ENCODE measurements at regions of chr10 and their contacts with region 1.

Region 1: DNA sequence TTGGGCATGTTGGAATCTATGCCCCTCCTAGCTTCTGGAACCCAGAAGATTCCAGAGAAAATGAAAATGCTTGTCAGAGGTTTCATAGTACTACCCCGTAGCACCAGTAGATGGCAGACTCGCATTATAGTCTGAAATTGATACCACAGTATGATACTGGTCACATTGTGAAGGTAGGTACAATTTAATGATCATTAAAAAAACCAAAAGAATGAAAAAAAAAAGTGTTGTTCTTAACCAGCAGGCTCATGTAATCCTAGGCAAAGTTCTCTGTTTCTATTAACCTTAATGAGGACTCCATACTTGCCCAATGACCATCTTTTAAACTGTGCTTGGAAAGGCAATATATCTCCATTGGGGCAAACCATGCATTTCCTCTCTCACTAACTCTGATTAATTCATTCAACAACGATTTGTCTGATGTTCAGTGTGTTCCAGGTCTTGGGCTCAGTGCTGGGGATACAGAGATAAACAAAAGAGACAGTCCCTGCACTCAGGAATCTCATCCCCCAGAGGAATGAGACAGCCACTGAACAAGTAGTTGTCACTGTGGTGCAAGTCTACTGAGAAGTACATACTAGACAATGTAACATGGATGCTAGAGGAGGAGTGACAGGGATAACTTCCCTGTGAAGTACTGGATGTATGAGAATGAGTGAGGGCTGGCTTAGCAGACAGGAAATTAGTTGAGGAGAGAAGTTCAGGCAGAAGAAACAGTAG is 223.5 kb upstream of the PHYHIPL start:
- DNase-seq: peak; percentile 49
- H3K4me3 ChIP-seq: no peak overlapping the region
- H3K27ac ChIP-seq: peak overlapping the region; percentile 57 to 63
- H3K4me1 ChIP-seq: no peaks in the 10 kb centered on the region
- H3K27me3 ChIP-seq: no peaks in the 10 kb centered on the region
- CTCF ChIP-seq: peak; percentile 66 to 89 (median 80)
- POLR2A ChIP-seq: no peak

Region 2: GRCh38 chr10:58781873-58782488 is 170.9 kb before region 1 on chr10:
- intact Hi-C with region 1: loop called (anchors 5 kb)
- DNase-seq: peak; percentile 47
- H3K4me3 ChIP-seq: no peak overlapping the region
- H3K27ac ChIP-seq: no peak overlapping the region
- H3K4me1 ChIP-seq: no peaks in the 10 kb centered on the region
- H3K27me3 ChIP-seq: no peaks in the 10 kb centered on the region
- CTCF ChIP-seq: peak; percentile 40 to 68 (median 62)
- POLR2A ChIP-seq: no peak

Region 3: DNA sequence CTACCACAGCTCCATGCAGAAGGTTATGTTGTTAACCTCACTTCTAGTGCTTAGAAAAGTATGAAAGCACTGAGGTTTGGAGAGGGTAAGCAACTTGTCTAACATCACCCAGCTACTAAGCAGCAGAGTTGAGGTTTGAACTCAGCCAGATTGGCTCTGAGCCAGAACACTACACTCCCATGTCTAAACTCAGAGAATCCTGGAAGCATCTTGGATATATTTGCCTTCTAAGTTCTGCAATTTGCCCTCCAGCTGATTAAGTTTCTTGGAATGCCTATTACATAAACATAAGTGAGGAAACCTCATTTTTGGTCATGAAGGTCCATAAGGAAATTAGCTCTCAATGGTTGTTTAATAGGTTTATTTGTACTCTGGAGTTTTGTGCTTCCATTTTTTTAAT is 145.5 kb after region 1 on chr10:
- intact Hi-C with region 1: loop called (anchors 10 kb)
- DNase-seq: no peak
- H3K4me3 ChIP-seq: no peak overlapping the region
- H3K27ac ChIP-seq: no peak overlapping the region
- H3K4me1 ChIP-seq: no peaks in the 10 kb centered on the region
- H3K27me3 ChIP-seq: no peaks in the 10 kb centered on the region
- CTCF ChIP-seq: no peak
- POLR2A ChIP-seq: no peak

Region 4: DNA sequence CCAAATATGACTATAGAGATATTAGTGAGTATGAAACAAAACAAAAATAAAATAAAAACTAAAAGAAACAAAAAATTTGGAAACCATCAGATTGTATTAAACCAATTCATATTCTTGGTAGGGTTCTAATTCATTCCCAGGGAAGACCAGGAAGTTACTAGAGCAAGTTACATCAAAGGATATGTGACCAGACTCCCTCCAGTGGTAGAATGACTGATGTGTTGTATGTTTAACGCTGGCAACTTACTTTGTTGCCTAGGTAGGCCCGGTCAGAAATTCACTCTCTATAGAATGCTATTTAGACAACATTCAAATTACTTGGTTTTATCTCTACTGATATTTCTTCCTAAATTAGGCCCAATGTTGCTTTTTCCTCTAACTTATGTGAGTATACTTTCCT is 228.8 kb after region 1 on chr10:
- intact Hi-C with region 1: loop called (anchors 2 kb)
- DNase-seq: peak; percentile 59
- H3K4me3 ChIP-seq: no peak overlapping the region
- H3K27ac ChIP-seq: no peak overlapping the region
- H3K4me1 ChIP-seq: no peaks in the 10 kb centered on the region
- H3K27me3 ChIP-seq: no peaks in the 10 kb centered on the region
- CTCF ChIP-seq: peak; percentile 12 to 69 (median 60)
- POLR2A ChIP-seq: no peak

Region 5: DNA sequence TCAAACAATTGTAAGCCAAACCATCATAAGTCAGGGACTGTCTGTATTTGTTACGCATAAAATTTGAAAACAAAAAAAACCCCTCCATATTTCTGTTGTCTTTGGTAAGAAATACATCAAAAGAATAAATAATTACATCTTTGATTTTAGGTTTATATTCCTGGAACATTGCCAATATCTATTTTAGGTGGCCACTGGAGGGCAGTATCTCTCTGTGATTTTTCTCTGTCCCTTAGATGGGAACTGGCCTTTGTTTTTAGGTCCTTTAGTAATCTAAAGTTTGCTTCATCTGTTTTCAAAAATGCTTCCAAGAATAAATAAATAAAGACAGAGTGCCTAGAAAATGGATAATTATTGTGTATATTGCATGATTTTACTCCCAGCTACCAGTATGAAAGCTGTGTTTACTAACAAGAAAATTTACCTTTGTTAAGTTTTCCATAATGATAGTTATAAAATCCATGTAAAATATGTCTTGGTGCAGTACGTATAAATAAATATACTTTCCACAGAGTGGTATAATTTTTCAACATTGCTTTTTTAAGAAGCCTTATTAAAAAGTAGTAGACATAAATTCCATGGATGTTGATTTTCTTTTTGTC is 287.8 kb after region 1 on chr10:
- intact Hi-C with region 1: loop called (anchors 5 kb)
- DNase-seq: peak; percentile 12
- H3K4me3 ChIP-seq: no peak overlapping the region
- H3K27ac ChIP-seq: peak overlapping the region; percentile 12 to 41
- H3K4me1 ChIP-seq: no peaks in the 10 kb centered on the region
- H3K27me3 ChIP-seq: no peaks in the 10 kb centered on the region
- CTCF ChIP-seq: peak; percentile 56 to 90 (median 80)
- POLR2A ChIP-seq: no peak

Region 6: GRCh38 chr10:59580026-59580863 is 627.3 kb after region 1 on chr10:
- intact Hi-C with region 1: loop called (anchors 10 kb)
- DNase-seq: no peak
- H3K4me3 ChIP-seq: no peak overlapping the region
- H3K27ac ChIP-seq: no peak overlapping the region
- H3K4me1 ChIP-seq: no peaks in the 10 kb centered on the region
- H3K27me3 ChIP-seq: no peaks in the 10 kb centered on the region
- CTCF ChIP-seq: peak in 3 of 4 experiments; percentile 25 to 45 (median 29)
- POLR2A ChIP-seq: no peak

Measured in prostate gland (tissue), 2 donors.